HCT116 (cell line): ENCODE measurements at regions of chr11 and their contacts with region 1.

Region 1: GRCh38 chr11:65918211-65919145 is at the start of gene C11orf68:
- DNase-seq: no peak
- ATAC-seq: peak; percentile 41
- H3K4me3 ChIP-seq: peak within 1 kb of the TSS; percentile 94 to 95
- H3K27ac ChIP-seq: peak within 1 kb of the TSS; percentile 95
- H3K4me1 ChIP-seq: peaks cover 43 to 60% of the 10 kb centered on the region in 2 experiments
- H3K27me3 ChIP-seq: no peaks in the 10 kb centered on the region
- CTCF ChIP-seq: no peak
- POLR2A ChIP-seq: no peak
- RAD21 ChIP-seq: no peak
- total RNA-seq, gene C11orf68: 49.8 TPM

Region 2: DNA sequence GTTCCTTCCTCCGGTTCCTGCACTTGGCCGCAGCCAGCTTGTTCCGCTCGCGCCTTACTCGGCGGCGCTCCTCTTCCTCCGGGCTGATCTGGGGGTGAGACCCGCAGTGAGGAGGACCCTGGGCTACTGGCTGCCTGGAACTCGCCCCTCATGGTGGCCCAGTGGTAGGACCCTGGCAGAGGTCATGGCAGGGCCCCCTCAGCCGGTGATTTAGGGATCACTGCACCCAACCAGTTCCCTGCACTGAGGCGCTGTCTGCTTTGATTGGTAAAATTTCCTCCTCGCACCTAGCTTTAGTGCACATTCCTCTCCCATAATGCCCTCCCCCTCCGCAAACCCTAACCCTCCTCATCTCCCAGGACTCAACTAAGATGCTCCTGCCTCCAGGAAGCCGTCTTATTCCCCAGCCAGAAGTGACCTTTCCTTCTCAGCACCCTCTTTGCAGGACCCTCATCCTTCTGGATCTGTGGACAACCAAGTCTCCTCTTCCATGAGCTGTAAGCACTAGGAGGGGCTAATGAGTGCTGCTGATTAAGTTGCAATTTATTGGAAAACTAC is 24.4 kb before region 1 on chr11:
- CTCF ChIA-PET with region 1: interaction called, 15 read pairs
- POLR2A ChIA-PET with region 1: interaction called, 80 read pairs
- RAD21 ChIA-PET with region 1: interaction called, 3 to 10 read pairs
- intact Hi-C with region 1: loop called (anchors 1 kb)
- DNase-seq: no peak
- ATAC-seq: no peak
- H3K4me3 ChIP-seq: no peak overlapping the region
- H3K27ac ChIP-seq: peak overlapping the region; percentile 41
- H3K4me1 ChIP-seq: peaks cover 22 to 91% of the 10 kb centered on the region in 2 experiments
- H3K27me3 ChIP-seq: no peaks in the 10 kb centered on the region
- CTCF ChIP-seq: no peak
- POLR2A ChIP-seq: no peak
- RAD21 ChIP-seq: no peak

Region 3: DNA sequence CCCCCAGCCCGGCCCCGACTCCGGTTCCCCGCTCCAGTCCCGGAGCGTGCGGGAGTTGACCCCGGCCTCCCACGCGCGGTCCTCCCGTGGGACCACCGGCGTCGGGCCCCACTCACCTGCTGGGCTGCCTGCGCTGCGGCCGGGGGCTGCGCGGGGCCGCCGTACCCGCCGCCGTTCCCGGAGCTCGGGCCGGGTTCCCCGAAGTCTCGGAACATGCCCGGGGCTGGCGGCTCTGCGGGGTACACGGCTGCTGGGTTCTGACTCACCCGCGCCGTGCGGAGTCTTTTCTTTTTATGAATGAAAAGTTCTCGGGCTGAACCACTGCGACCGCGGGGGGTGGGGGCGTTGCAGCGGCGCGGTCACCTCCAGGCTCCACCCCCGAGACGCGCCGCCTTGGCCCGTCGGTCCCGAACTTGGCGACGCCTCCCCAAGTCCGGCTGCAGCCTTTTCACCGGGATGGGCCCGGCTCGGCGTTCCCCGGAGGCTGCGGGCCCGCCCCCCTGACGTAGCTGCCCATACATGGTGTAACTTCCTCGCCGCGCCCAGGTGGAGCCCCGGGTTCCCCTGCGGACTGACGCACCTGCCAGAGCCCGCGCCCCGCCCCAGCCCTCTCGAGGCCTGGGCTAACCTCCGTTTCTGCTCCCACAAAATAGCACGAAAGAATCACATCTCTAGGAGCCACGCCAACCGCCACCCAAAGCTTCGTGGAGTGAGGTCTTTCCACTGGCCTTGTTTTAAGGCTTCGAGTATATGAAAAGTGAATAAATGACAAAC is 18.2 kb before region 1 on chr11 and contains the start of gene FOSL1:
- CTCF ChIA-PET with region 1: interaction called, 3 read pairs
- POLR2A ChIA-PET with region 1: interaction called, 80 read pairs
- RAD21 ChIA-PET with region 1: interaction called in 1 of 2 experiments, 3 read pairs
- intact Hi-C with region 1: loop called (anchors 1 kb)
- DNase-seq: peak; percentile 97
- ATAC-seq: peak; percentile 79
- H3K4me3 ChIP-seq: peak within 1 kb of the TSS; percentile 90 to 98
- H3K27ac ChIP-seq: peak within 1 kb of the TSS; percentile 99
- H3K4me1 ChIP-seq: peaks cover 51 to 85% of the 10 kb centered on the region in 2 experiments
- H3K27me3 ChIP-seq: no peaks in the 10 kb centered on the region
- CTCF ChIP-seq: no peak
- POLR2A ChIP-seq: peak; percentile 97
- RAD21 ChIP-seq: no peak
- total RNA-seq, gene FOSL1: 125 TPM

Region 4: DNA sequence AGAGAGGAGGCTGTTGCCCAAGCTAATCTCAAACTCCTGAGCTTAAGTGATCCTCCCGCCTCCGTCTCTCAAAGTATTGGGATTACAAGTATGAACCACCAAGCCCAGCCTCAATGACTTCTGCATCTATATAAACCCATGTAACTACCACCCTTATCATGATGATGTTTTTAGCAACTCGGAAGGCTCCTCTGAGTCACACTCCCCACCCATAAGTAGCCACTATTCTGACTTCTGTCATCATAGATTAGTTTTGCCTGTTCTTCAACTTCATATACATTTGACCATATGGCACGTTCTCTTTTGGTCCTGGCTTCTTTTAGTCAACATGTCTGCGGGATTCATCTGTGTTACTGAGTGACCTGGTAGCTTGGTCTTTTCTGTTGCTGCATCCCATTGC is 11.9 kb before region 1 on chr11:
- CTCF ChIA-PET with region 1: no interaction called
- POLR2A ChIA-PET with region 1: interaction called, 10 read pairs
- RAD21 ChIA-PET with region 1: interaction called in 1 of 2 experiments, 3 read pairs
- intact Hi-C with region 1: no loop called
- DNase-seq: no peak
- ATAC-seq: no peak
- H3K4me3 ChIP-seq: no peak overlapping the region
- H3K27ac ChIP-seq: no peak overlapping the region
- H3K4me1 ChIP-seq: peaks cover 46 to 96% of the 10 kb centered on the region in 2 experiments
- H3K27me3 ChIP-seq: no peaks in the 10 kb centered on the region
- CTCF ChIP-seq: no peak
- POLR2A ChIP-seq: no peak
- RAD21 ChIP-seq: no peak